ENCODE measurements at regions of chrX and their contacts with region 1.

Region 1: GRCh38 chrX:69222103-69223090 is 57.1 kb upstream of the PJA1 start:
- DNase-seq: peak; percentile 64
- H3K4me3 ChIP-seq: no peak overlapping the region
- H3K27ac ChIP-seq: peak overlapping the region; percentile 24
- H3K4me1 ChIP-seq: no peaks in the 10 kb centered on the region
- H3K27me3 ChIP-seq: no peaks in the 10 kb centered on the region
- CTCF ChIP-seq: peak; percentile 63 to 89

Region 2: DNA sequence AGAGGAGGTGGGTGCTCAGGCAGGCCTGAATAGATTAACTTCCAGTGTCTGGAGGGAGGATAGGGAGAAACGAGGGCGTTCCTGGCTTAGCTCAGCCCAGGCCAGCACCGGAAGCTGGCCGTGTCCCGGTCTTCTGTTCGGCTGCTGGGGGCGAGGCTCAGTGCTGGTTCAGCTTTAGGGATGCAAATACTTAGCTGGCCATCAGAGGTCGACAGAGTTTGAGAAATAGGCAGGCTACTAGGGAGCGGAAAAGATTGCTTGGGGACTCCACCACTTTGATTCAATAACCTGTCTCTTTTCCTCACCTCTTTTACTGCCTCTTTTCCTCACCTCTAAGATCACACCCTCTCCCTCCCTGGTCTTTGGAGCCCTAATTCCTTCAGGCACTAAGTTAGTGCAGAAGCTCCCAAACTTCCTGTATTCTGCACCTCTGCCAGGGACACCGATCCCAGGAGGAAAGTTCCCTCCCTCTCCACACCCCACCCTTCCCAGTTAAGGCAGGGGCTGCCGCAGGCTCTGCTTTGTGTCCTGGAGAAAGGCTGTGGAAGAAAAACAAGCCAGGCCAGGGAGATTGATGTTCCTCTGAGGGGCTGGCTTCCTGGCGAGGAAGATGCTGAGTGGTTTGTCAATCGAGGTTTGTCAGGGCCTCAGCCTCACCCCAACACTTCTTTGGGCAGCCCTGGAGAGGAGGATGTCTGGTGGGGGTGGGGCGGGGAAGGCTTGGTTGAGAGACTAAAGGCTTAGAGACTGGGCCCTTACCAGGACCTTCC is 399.6 kb before region 1 on chrX:
- CTCF ChIA-PET with region 1: interaction called, 12 read pairs
- dilution Hi-C with region 1: no loop called
- in situ Hi-C with region 1: loop called (anchors 5 kb)
- intact Hi-C with region 1: loop called (anchors 1 kb)
- DNase-seq: no peak
- H3K4me3 ChIP-seq: no peak overlapping the region
- H3K27ac ChIP-seq: no peak overlapping the region
- H3K4me1 ChIP-seq: peaks cover 4% of the 10 kb centered on the region
- H3K27me3 ChIP-seq: no peaks in the 10 kb centered on the region
- CTCF ChIP-seq: peak; percentile 71 to 72

Region 3: GRCh38 chrX:69032601-69033000 is 189.8 kb before region 1 on chrX:
- CTCF ChIA-PET with region 1: no interaction called
- dilution Hi-C with region 1: no loop called
- in situ Hi-C with region 1: no loop called
- intact Hi-C with region 1: loop called (anchors 1 kb)
- DNase-seq: peak; percentile 84
- H3K4me3 ChIP-seq: no peak overlapping the region
- H3K27ac ChIP-seq: peak overlapping the region; percentile 82
- H3K4me1 ChIP-seq: peaks cover 41% of the 10 kb centered on the region
- H3K27me3 ChIP-seq: no peaks in the 10 kb centered on the region
- CTCF ChIP-seq: peak in 1 of 2 donors; percentile 41

Region 4: GRCh38 chrX:69093960-69094871 is 128.2 kb before region 1 on chrX:
- CTCF ChIA-PET with region 1: no interaction called
- dilution Hi-C with region 1: no loop called
- in situ Hi-C with region 1: no loop called
- intact Hi-C with region 1: loop called (anchors 1 kb)
- DNase-seq: peak; percentile 26
- H3K4me3 ChIP-seq: no peak overlapping the region
- H3K27ac ChIP-seq: no peak overlapping the region
- H3K4me1 ChIP-seq: no peaks in the 10 kb centered on the region
- H3K27me3 ChIP-seq: no peaks in the 10 kb centered on the region
- CTCF ChIP-seq: peak; percentile 54 to 56

Region 5: GRCh38 chrX:69153060-69153730 is 69.2 kb before region 1 on chrX:
- CTCF ChIA-PET with region 1: no interaction called
- dilution Hi-C with region 1: loop called (anchors 5 kb)
- in situ Hi-C with region 1: no loop called
- intact Hi-C with region 1: no loop called
- DNase-seq: no peak
- H3K4me3 ChIP-seq: no peak overlapping the region
- H3K27ac ChIP-seq: no peak overlapping the region
- H3K4me1 ChIP-seq: peaks cover 21% of the 10 kb centered on the region
- H3K27me3 ChIP-seq: no peaks in the 10 kb centered on the region
- CTCF ChIP-seq: no peak

Region 6: GRCh38 chrX:69203591-69203990 is 18.8 kb before region 1 on chrX:
- CTCF ChIA-PET with region 1: no interaction called
- dilution Hi-C with region 1: no loop called
- in situ Hi-C with region 1: no loop called
- intact Hi-C with region 1: no loop called
- DNase-seq: no peak
- H3K4me3 ChIP-seq: no peak overlapping the region
- H3K27ac ChIP-seq: no peak overlapping the region
- H3K4me1 ChIP-seq: no peaks in the 10 kb centered on the region
- H3K27me3 ChIP-seq: no peaks in the 10 kb centered on the region
- CTCF ChIP-seq: no peak

Region 7: DNA sequence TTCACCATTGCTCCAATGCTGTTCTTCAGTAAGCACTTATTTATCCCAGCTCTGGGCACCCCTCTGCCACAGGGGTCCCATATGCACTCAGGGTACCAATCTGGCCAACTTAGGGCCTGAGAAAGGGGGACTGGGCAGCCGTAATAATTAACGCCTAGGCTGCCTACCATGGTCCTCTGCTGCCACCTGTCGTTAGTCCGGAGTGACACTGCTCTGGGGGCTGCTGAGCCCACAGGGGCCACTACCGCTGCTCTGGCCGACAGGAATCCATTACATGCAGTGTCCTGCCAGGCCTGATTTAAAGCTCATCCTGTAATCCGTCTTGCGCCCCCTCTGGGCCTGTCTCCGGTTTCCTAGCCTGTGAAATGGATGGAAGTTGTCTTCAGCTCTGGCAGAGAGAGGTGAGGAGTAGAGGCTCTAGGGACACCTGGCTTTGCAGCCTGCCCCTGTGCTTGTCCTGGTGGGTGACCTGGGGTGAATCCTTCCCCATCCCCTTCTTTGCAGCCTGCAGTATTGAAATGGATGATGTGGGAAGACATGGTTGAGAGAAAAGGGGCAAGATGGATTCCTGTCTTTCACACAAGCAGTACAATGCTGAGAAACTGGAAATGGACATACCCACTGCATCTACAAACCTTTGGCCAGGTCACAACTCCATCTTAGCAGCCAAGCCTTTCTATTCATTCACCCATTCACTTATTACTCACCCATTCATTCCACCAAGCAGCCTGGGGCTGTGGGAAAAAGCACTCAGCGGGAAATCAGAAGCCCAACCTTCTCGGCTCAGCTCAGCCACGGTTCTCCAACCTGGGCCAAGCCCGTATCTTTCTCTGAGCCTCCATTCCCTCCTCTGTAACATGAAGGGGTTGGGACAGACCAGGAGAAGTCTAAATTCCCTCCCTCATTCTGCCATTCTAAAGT is 165.4 kb after region 1 on chrX:
- CTCF ChIA-PET with region 1: no interaction called
- dilution Hi-C with region 1: no loop called
- in situ Hi-C with region 1: no loop called
- intact Hi-C with region 1: loop called (anchors 2 kb)
- DNase-seq: peak; percentile 8
- H3K4me3 ChIP-seq: no peak overlapping the region
- H3K27ac ChIP-seq: no peak overlapping the region
- H3K4me1 ChIP-seq: peaks cover 9% of the 10 kb centered on the region
- H3K27me3 ChIP-seq: no peaks in the 10 kb centered on the region
- CTCF ChIP-seq: peak; percentile 64 to 85